Panc1 (cell line): ENCODE measurements at regions of chr1 and their contacts with region 1.

Region 1: GRCh38 chr1:24391882-24392603 is 21.5 kb downstream of the STPG1 start:
- DNase-seq: no peak
- ATAC-seq: peak; percentile 91
- H3K4me3 ChIP-seq: peak overlapping the region in 1 of 2 experiments; percentile 12; a peak in 2 of 4 replicates
- H3K27ac ChIP-seq: peak overlapping the region; percentile 70
- H3K4me1 ChIP-seq: peaks cover 22% of the 10 kb centered on the region
- H3K27me3 ChIP-seq: no peaks in the 10 kb centered on the region
- CTCF ChIP-seq: peak; percentile 91

Region 2: DNA sequence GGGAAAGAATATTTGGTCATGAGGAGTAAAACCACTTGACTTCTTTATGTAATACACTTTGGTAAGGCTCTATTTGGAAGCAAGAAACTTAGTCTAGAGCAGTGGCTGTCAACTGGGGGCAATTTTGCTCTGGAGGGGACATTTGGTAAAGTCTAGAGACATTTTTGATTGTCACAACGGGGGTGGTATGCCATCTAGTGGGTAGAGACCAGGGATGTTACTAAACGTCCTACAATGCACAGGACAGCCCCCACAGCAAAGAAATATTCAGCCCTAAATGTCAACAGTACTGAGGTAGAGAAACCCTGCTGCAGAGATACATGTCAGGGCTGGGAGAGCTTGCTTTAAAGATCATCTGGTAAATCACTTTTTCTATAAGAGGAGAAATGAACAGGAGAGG is 537.5 kb before region 1 on chr1:
- CTCF ChIA-PET with region 1: no interaction called
- POLR2A ChIA-PET with region 1: no interaction called
- in situ Hi-C with region 1: no loop called
- intact Hi-C with region 1: no loop called
- DNase-seq: no peak
- ATAC-seq: peak; percentile 86
- H3K4me3 ChIP-seq: no peak overlapping the region
- H3K27ac ChIP-seq: no peak overlapping the region
- H3K4me1 ChIP-seq: no peaks in the 10 kb centered on the region
- H3K27me3 ChIP-seq: no peaks in the 10 kb centered on the region
- CTCF ChIP-seq: peak; percentile 66

Region 3: DNA sequence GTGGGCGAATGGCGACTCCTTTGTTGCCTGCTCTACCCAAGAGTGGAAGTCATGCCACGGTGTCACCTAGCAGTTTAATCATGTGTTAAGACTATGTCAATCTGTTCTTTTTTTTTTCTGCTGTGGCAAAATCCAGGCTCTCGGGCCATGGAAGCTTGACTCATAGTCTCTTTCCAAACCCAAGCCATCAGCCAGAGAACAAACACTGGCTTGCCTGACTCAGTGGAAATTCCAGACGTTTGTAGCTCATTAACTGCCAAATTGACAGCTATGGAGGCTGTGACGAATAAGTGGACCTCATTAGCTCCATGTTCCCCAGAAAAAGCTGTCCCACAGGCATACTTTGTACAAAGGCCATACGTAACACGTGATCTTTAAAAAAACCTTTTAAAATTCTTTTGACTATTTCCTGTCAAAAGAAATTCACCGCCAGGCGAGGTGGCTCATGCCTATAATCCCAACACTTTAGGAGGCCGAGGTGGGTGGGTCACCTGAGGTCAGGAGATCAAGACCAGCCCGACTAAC is 440.4 kb before region 1 on chr1:
- CTCF ChIA-PET with region 1: no interaction called
- POLR2A ChIA-PET with region 1: no interaction called
- in situ Hi-C with region 1: no loop called
- intact Hi-C with region 1: no loop called
- DNase-seq: peak; percentile 94
- ATAC-seq: peak; percentile 84
- H3K4me3 ChIP-seq: peak overlapping the region in 1 of 2 experiments; percentile 36; a peak in 2 of 4 replicates
- H3K27ac ChIP-seq: peak overlapping the region; percentile 75
- H3K4me1 ChIP-seq: peaks cover 41% of the 10 kb centered on the region
- H3K27me3 ChIP-seq: no peaks in the 10 kb centered on the region
- CTCF ChIP-seq: no peak

Region 4: GRCh38 chr1:24150234-24151174 is 241.5 kb before region 1 on chr1:
- CTCF ChIA-PET with region 1: interaction called, 47 read pairs
- POLR2A ChIA-PET with region 1: no interaction called
- in situ Hi-C with region 1: no loop called
- intact Hi-C with region 1: loop called (anchors 2 kb)
- DNase-seq: peak; percentile 84
- ATAC-seq: peak; percentile 98
- H3K4me3 ChIP-seq: peak overlapping the region; percentile 20 to 51
- H3K27ac ChIP-seq: peak overlapping the region; percentile 37
- H3K4me1 ChIP-seq: peaks cover 5% of the 10 kb centered on the region; the same call in 1 of the 2 replicates
- H3K27me3 ChIP-seq: no peaks in the 10 kb centered on the region
- CTCF ChIP-seq: peak; percentile 95

Region 5: GRCh38 chr1:24289937-24290595 is 102.0 kb before region 1 on chr1:
- CTCF ChIA-PET with region 1: interaction called, 10 read pairs
- POLR2A ChIA-PET with region 1: no interaction called
- in situ Hi-C with region 1: no loop called
- intact Hi-C with region 1: no loop called
- DNase-seq: peak; percentile 78
- ATAC-seq: peak; percentile 89
- H3K4me3 ChIP-seq: no peak overlapping the region
- H3K27ac ChIP-seq: peak overlapping the region; percentile 46
- H3K4me1 ChIP-seq: peaks cover 26% of the 10 kb centered on the region
- H3K27me3 ChIP-seq: no peaks in the 10 kb centered on the region
- CTCF ChIP-seq: no peak

Region 6: DNA sequence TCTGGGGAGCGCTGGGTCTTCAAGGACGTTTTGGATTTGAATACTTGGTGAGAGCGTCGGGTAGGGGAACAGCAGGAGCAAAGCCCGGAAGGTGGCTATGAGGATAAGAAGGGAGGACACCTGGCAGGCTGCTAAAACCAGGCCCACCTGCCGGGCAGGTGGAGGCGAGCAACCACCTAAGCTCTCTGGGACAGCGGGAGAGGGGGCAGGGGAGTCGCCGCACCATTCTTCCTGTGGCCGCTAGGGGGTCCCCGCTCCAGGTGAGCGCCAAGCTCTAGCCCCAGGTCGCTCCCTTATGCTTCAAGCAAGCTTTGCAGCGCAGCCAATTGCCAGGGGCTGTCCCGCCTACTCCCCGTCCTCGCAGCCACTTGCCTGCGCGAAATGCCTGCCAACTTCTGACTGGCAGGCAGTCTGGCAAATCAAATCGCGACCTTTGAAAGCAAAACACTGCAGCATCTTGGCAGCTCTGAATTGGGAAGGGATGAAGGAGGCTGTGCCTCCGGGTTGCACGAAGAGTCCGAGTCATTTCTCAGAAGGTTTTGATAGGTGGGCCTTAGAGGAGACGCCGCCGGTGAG is 23.4 kb after region 1 on chr1 and contains the start of gene NIPAL3:
- CTCF ChIA-PET with region 1: interaction called, 4 read pairs
- POLR2A ChIA-PET with region 1: interaction called, 11 read pairs
- in situ Hi-C with region 1: no loop called
- intact Hi-C with region 1: no loop called
- DNase-seq: peak; percentile 98
- ATAC-seq: peak; percentile 94
- H3K4me3 ChIP-seq: peak within 1 kb of the TSS; percentile 78 to 80
- H3K27ac ChIP-seq: peak within 1 kb of the TSS; percentile 80
- H3K4me1 ChIP-seq: peaks cover 27% of the 10 kb centered on the region; the same call in 1 of the 2 replicates
- H3K27me3 ChIP-seq: no peaks in the 10 kb centered on the region
- CTCF ChIP-seq: peak; percentile 97
- total RNA-seq, gene NIPAL3: 13.6 TPM